ENCODE measurements at regions of chr5 and their contacts with region 1.

Region 1: DNA sequence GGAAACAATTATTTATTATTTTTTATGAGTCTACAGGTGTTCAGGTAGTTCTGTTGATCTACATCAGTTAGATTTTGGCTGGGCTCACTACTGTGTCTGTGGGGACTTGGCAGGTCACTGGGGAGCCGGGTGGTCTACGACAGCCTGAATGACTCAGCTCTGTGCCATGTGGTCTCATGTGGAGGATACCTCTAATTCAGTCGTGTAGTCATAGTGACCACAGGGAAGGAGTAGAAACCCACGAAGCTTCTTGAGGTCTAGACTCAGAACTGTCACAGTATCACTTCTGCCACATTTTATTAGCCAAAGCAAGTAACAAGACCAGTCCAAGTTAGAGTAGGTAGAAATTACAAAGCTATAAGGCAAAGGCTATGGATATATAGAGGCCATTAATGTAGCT is 64.7 kb upstream of the GRAMD2B start:
- DNase-seq: no peak
- H3K4me3 ChIP-seq: no peak overlapping the region
- H3K27ac ChIP-seq: no peak overlapping the region
- H3K4me1 ChIP-seq: peaks cover 11% of the 10 kb centered on the region
- H3K27me3 ChIP-seq: no peaks in the 10 kb centered on the region
- CTCF ChIP-seq: no peak
- POLR2A ChIP-seq: no peak

Region 2: DNA sequence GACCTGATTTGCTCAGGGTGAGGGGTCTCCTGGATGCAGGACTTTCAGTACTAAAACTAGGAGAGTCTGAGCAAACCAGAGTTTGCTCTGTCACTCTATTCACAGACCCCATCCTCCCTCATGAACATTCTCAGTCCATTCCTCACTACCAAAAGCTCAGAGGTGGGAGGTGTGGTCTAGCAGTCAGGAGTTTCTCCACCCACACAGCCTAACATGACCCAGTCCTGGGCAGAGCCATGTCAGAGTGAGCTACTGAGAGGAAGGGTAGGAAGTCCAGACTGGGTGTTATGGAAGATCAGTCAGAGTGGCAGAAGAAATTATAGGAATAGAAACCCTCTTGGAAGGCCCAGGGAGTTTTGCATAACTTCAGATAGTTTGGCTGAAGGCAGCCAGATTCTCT is 48.7 kb before region 1 on chr5:
- intact Hi-C with region 1: no loop called
- DNase-seq: no peak
- H3K4me3 ChIP-seq: no peak overlapping the region
- H3K27ac ChIP-seq: no peak overlapping the region
- H3K4me1 ChIP-seq: no peaks in the 10 kb centered on the region
- H3K27me3 ChIP-seq: no peaks in the 10 kb centered on the region
- CTCF ChIP-seq: no peak
- POLR2A ChIP-seq: no peak

Region 3: DNA sequence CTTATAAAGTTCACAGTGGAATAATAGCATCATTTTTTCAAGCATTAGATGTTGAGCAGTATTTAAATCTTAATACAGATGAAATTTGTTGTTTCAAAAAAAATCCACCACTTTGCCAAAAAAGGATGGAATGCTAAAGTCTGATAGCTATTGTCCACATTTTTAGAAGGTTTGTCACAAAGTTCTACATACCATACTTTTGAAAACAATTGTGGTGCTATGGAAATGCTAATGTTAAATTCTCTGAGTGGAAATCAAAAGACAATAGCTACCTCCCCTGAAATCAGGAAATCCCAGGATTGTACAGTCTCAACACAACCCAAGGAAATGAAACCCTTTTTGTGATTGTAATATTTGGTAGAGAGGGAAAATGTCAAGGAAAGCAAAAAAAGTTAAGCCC is 45.4 kb after region 1 on chr5:
- intact Hi-C with region 1: no loop called
- DNase-seq: no peak
- H3K4me3 ChIP-seq: no peak overlapping the region
- H3K27ac ChIP-seq: no peak overlapping the region
- H3K4me1 ChIP-seq: no peaks in the 10 kb centered on the region
- H3K27me3 ChIP-seq: no peaks in the 10 kb centered on the region
- CTCF ChIP-seq: no peak
- POLR2A ChIP-seq: no peak

Region 4: GRCh38 chr5:126490167-126490940 is 131.8 kb after region 1 on chr5:
- intact Hi-C with region 1: no loop called
- DNase-seq: no peak
- H3K4me3 ChIP-seq: no peak overlapping the region
- H3K27ac ChIP-seq: peak overlapping the region; percentile 64
- H3K4me1 ChIP-seq: no peaks in the 10 kb centered on the region
- H3K27me3 ChIP-seq: no peaks in the 10 kb centered on the region
- CTCF ChIP-seq: no peak
- POLR2A ChIP-seq: no peak

Region 5: DNA sequence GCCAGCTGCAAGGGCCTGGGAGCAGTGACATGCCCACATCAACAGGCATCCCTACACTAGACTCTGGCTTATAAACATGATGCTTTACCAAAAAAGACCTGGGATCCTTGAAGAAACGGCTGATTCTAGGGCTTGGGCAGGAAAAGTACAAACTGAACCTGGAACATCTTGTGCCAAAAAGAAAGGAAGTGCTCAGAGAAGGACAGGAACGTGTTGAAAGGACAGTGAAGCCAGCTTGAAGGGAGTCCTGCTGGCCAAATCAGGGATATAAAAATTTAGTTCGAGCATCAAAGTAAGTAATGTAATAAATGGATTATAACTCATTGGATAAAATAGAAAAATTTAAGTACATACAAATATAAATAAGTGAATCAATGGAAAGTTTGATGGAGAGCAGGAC is 178.3 kb after region 1 on chr5:
- intact Hi-C with region 1: loop called (anchors 5 kb)
- DNase-seq: no peak
- H3K4me3 ChIP-seq: no peak overlapping the region
- H3K27ac ChIP-seq: no peak overlapping the region
- H3K4me1 ChIP-seq: peaks cover 8% of the 10 kb centered on the region
- H3K27me3 ChIP-seq: no peaks in the 10 kb centered on the region
- CTCF ChIP-seq: no peak
- POLR2A ChIP-seq: no peak